SK-N-SH (cell line): ENCODE measurements at regions of chr7 and their contacts with region 1.

Region 1: DNA sequence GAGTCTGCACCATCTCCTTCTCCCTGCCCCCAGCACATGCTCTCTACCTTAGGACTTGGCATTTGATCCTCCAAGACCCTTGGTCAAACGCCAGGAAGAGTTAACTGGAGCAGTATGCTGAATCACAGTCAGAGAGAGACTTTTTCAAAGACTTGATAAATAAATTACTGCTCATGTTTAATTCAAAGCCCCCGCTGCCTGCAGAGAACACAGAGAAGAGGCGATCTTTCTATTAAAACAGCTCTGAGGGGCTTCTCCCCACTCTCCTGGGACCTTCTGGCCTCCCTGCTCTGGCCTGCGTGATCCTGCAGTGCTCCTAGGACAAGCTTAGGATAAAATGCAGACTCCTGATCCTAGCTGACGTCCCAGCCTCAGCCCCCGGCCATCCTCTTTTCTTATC is 47.8 kb downstream of the NPTX2 start:
- DNase-seq: no peak
- H3K4me3 ChIP-seq: no peak overlapping the region
- H3K27ac ChIP-seq: no peak overlapping the region
- H3K4me1 ChIP-seq: no peaks in the 10 kb centered on the region; a peak in 1 of 4 replicates
- H3K27me3 ChIP-seq: no peaks in the 10 kb centered on the region
- CTCF ChIP-seq: no peak
- EP300 ChIP-seq: no peak
- RAD21 ChIP-seq: no peak

Region 2: DNA sequence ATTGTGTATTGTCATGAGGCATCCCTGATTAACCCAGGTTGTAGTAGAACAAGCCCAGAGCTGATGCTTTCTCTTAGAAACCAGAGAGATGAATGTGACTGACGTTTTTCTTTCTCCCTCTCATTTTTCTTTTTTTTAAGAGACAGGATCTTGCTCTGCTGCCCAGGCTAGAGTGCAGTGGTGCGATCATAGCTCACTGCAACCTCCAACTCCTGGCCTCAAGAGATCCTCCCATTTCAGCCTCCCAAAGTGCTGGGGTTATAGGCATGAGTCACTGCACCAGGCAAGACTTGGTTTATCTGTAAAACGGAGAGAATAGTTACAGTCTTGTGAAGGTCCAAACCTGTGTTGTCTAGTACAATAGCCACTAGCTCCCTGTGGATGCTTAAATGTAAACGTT is 552.8 kb before region 1 on chr7:
- CTCF ChIA-PET with region 1: no interaction called
- POLR2A ChIA-PET with region 1: interaction called, 10 read pairs
- DNase-seq: no peak
- H3K4me3 ChIP-seq: no peak overlapping the region
- H3K27ac ChIP-seq: no peak overlapping the region
- H3K4me1 ChIP-seq: peaks cover 9 to 12% of the 10 kb centered on the region in 2 experiments; a peak in 3 of 4 replicates
- H3K27me3 ChIP-seq: no peaks in the 10 kb centered on the region
- CTCF ChIP-seq: no peak
- EP300 ChIP-seq: no peak
- RAD21 ChIP-seq: no peak